ENCODE measurements at regions of chr12 and their contacts with region 1.

Region 1: DNA sequence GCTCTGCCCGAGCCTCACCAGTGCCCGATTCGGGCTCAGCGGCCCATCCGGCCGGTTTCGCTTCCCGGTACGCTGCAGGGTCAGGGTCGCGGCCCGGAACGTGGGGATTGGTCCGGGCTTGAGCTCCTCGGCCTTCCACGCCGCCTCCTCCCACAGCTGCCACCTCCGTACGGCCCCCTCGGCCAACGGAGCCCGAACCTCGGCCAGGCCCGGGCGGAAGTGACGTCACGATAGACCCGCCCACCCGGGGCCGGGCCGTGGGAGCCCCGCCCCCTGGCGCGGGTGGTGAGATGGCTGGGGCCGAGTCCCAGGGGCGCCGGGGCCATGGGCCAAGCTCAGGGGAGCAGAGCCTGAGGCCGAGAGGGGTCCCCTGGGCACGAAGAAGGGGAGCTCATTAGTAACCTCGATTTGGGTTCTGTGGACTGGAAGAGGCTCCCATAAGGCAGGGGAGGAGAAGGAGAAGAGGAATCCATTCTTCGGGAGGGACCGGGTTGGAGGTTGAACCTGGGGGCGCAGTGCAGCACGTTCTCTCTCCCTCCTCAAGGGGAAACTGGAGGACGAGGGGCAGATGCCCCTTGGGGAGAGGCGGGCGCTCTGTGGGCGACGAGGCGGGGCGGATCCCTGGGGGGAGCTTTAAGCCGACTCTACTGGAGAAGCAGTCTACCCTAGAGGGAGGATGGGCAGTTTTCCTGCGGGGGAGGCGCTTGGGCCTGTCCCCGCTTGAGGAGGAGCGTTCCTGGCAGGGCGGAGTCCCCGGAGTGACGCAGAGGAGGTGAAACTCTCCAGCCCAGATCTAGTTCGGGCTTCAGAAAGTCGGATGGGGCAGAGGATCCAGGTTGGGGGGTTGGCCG is at the start of gene MLF2:
- DNase-seq: peak; percentile 99
- H3K4me3 Mint-ChIP-seq: peak within 1 kb of the TSS; percentile 93
- H3K27ac Mint-ChIP-seq: peak within 1 kb of the TSS; percentile 96
- H3K4me1 Mint-ChIP-seq: peaks cover 24% of the 10 kb centered on the region
- H3K27me3 Mint-ChIP-seq: no peaks in the 10 kb centered on the region
- total RNA-seq, gene MLF2: 140 to 141 TPM

Region 2: DNA sequence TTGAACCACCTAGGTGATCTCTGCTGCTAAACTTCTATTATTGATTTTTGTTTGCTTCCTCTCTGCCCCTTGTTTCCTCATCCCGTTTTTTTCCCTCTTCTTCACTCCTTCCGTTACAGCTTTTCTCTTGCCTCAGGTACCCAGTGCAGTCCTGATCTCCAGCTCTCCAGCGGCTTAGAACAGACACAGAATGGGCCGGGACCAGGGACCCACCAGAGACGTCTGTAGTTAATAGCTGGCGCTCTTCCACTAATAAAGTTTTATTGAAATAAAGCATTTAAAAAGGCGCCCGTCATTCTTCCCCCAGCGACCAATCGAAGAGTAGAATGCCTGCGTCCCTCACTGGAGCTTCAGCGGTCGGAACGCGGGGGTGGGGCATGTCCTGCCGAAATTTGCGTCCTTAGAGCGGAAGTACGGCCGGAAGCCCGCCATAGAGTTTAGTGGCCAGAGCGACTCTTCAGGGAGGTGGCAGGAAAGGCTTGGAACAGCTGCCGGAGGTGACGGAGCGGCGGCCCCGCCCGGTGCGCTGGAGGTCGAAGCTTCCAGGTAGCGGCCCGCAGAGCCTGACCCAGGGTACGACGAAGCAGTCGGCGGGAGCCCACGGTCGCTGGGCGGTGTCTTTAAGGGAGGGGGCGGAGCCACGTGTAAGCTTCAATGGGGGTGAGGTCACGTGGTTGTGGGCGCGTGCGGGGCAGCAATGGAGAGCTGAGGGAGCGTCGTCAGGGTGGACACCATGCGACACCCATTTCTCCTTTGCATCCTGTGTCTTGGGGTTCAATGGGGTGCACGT is 29.3 kb before region 1 on chr12 and contains the start of gene COPS7A:
- CTCF ChIA-PET with region 1: interaction called, 34 read pairs
- POLR2A ChIA-PET with region 1: interaction called, 12 read pairs
- intact Hi-C with region 1: no loop called
- DNase-seq: peak; percentile 99
- H3K4me3 Mint-ChIP-seq: peak within 1 kb of the TSS; percentile 83
- H3K27ac Mint-ChIP-seq: peak within 1 kb of the TSS; percentile 84
- H3K4me1 Mint-ChIP-seq: peaks cover 25% of the 10 kb centered on the region
- H3K27me3 Mint-ChIP-seq: no peaks in the 10 kb centered on the region
- total RNA-seq, gene COPS7A: 37.6 to 39.4 TPM

Region 3: GRCh38 chr12:6771091-6771495 is 17.9 kb after region 1 on chr12:
- CTCF ChIA-PET with region 1: interaction called, 80 read pairs
- POLR2A ChIA-PET with region 1: interaction called, 19 read pairs
- intact Hi-C with region 1: loop called (anchors 2 kb)
- DNase-seq: peak; percentile 55
- H3K4me3 Mint-ChIP-seq: no peak overlapping the region
- H3K27ac Mint-ChIP-seq: peak overlapping the region; percentile 84
- H3K4me1 Mint-ChIP-seq: peaks cover 57% of the 10 kb centered on the region
- H3K27me3 Mint-ChIP-seq: peaks cover 13% of the 10 kb centered on the region

Region 4: GRCh38 chr12:6792522-6793201 is 39.5 kb after region 1 on chr12:
- CTCF ChIA-PET with region 1: interaction called, 81 read pairs
- POLR2A ChIA-PET with region 1: interaction called, 37 read pairs
- intact Hi-C with region 1: loop called (anchors 1 kb)
- DNase-seq: peak; percentile 55
- H3K4me3 Mint-ChIP-seq: peak overlapping the region; percentile 91
- H3K27ac Mint-ChIP-seq: peak overlapping the region; percentile 95
- H3K4me1 Mint-ChIP-seq: peaks cover 54% of the 10 kb centered on the region
- H3K27me3 Mint-ChIP-seq: no peaks in the 10 kb centered on the region

Region 5: GRCh38 chr12:6833189-6833890 is 80.2 kb after region 1 on chr12:
- CTCF ChIA-PET with region 1: interaction called, 44 read pairs
- POLR2A ChIA-PET with region 1: interaction called, 7 read pairs
- intact Hi-C with region 1: no loop called
- DNase-seq: no peak
- H3K4me3 Mint-ChIP-seq: no peak overlapping the region
- H3K27ac Mint-ChIP-seq: no peak overlapping the region
- H3K4me1 Mint-ChIP-seq: peaks cover 10% of the 10 kb centered on the region
- H3K27me3 Mint-ChIP-seq: peaks cover 7% of the 10 kb centered on the region

Region 6: GRCh38 chr12:6890789-6891645 is 137.9 kb after region 1 on chr12:
- CTCF ChIA-PET with region 1: interaction called, 5 read pairs
- POLR2A ChIA-PET with region 1: no interaction called
- intact Hi-C with region 1: loop called (anchors 1 kb)
- DNase-seq: peak; percentile 99
- H3K4me3 Mint-ChIP-seq: peak overlapping the region; percentile 84
- H3K27ac Mint-ChIP-seq: peak overlapping the region; percentile 97
- H3K4me1 Mint-ChIP-seq: peaks cover 17% of the 10 kb centered on the region
- H3K27me3 Mint-ChIP-seq: no peaks in the 10 kb centered on the region